Prostate gland (tissue), 2 donors: ENCODE measurements at regions of chr1 and their contacts with region 1.

Region 1: GRCh38 chr1:209692745-209693504 is 11.7 kb upstream of the HSD11B1 start:
- DNase-seq: peak; percentile 76
- H3K4me3 ChIP-seq: no peak overlapping the region
- H3K27ac ChIP-seq: peak overlapping the region in 1 of 2 donors; percentile 16
- H3K4me1 ChIP-seq: no peaks in the 10 kb centered on the region
- H3K27me3 ChIP-seq: no peaks in the 10 kb centered on the region
- CTCF ChIP-seq: peak; percentile 73 to 90 (median 86)
- POLR2A ChIP-seq: no peak

Region 2: GRCh38 chr1:209542585-209542984 is 150.3 kb before region 1 on chr1:
- intact Hi-C with region 1: no loop called
- DNase-seq: no peak
- H3K4me3 ChIP-seq: no peak overlapping the region
- H3K27ac ChIP-seq: no peak overlapping the region
- H3K4me1 ChIP-seq: no peaks in the 10 kb centered on the region
- H3K27me3 ChIP-seq: no peaks in the 10 kb centered on the region
- CTCF ChIP-seq: no peak
- POLR2A ChIP-seq: no peak

Region 3: GRCh38 chr1:209576798-209577197 is 116.1 kb before region 1 on chr1:
- intact Hi-C with region 1: loop called (anchors 2 kb)
- DNase-seq: peak; percentile 63
- H3K4me3 ChIP-seq: no peak overlapping the region
- H3K27ac ChIP-seq: no peak overlapping the region
- H3K4me1 ChIP-seq: no peaks in the 10 kb centered on the region
- H3K27me3 ChIP-seq: no peaks in the 10 kb centered on the region
- CTCF ChIP-seq: peak; percentile 64 to 90 (median 86)
- POLR2A ChIP-seq: no peak

Region 4: DNA sequence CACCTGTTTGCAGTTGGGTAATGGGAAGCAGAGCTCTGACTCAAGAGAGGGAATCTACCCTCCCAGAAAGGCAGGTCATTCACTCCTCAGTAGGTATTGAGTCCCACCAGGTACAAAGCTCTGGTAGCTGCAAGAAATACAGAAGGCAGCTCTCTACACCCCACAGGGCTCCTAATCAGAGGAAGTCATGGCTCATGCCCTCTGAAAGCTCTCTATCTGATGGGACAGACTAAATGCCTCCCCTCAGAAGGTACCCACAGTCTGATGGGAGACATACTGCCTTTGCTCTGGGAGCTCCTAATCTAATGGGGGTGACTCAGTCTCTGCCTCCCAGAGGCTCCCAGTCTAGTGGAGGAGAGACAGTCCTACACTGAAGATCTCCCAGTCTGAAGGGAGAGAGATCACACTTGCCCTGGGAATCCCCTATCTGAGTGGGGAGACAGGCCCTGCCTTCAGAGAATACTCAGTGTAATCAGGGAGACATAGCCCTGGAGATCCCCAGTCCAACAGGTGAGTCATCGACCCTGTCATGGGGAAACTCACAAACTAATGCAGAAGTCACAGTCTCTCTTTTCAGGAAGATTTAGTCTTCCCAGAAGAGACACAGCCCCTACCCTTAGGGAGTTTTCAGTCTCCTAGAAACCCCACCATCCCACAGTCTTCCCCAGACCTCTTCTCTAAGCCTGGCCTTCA is 85.7 kb before region 1 on chr1:
- intact Hi-C with region 1: loop called (anchors 5 kb)
- DNase-seq: no peak
- H3K4me3 ChIP-seq: no peak overlapping the region
- H3K27ac ChIP-seq: no peak overlapping the region
- H3K4me1 ChIP-seq: no peaks in the 10 kb centered on the region
- H3K27me3 ChIP-seq: no peaks in the 10 kb centered on the region
- CTCF ChIP-seq: no peak
- POLR2A ChIP-seq: no peak

Region 5: DNA sequence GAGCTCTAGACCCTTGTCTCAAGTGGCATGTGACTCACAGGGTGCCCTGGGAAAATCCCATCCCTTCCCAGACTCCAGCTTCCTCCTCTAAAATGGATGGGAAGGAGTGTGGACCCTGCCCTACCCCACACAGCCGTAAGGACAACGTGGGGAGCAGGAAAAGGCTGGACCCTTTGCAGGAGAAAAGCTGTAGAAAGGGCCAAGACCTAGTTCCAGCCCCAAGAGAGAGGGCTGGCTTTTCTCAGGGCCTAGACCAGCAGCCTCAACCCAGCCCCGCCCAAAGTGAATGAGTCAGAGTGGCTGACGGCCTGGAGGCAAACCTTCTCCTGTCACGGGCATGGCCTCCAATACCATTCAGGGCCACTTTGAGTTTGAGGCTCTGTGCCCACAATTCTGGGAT is 41.8 kb before region 1 on chr1:
- intact Hi-C with region 1: no loop called
- DNase-seq: peak; percentile 68
- H3K4me3 ChIP-seq: peak overlapping the region in 1 of 2 donors; percentile 19
- H3K27ac ChIP-seq: peak overlapping the region in 1 of 2 donors; percentile 79
- H3K4me1 ChIP-seq: no peaks in the 10 kb centered on the region
- H3K27me3 ChIP-seq: no peaks in the 10 kb centered on the region
- CTCF ChIP-seq: no peak
- POLR2A ChIP-seq: peak; percentile 65

Region 6: DNA sequence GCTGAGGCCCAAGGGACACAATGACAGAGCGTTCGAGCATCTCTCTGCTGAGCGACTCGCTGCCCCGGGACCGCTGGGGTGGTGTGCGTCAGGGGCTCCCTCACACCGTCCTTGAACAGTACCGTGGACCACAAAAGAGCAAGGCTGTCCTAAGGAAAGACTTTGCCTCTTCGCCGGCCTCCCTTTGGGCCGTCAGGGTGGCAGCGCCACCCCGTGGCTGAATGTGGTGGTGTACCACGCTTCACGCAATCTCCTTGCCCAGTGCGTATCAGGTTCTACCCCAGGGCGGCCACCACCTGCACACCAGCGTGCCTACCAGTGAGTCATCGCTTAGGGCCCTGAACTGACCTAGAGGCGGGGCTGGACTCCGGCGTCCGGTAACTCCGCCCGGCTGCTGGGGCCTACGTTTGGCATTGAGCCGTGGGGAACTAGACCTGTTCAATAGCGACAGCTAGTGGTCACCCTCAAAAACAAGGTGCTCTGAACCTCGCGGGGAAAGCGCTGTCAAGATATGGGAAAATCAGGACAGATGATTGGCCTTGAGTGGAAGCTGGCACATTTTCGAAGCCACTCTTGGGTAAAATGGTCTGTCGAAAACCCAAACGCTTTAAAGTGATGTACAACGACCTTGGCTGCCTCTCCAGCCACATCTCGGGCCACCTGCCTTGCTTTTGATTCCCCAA is 54.8 kb after region 1 on chr1:
- intact Hi-C with region 1: loop called (anchors 2 kb)
- DNase-seq: peak; percentile 89
- H3K4me3 ChIP-seq: peak overlapping the region in 1 of 2 donors; percentile 13
- H3K27ac ChIP-seq: peak overlapping the region; percentile 32 to 36
- H3K4me1 ChIP-seq: peaks cover 5% of the 10 kb centered on the region
- H3K27me3 ChIP-seq: no peaks in the 10 kb centered on the region
- CTCF ChIP-seq: peak; percentile 85 to 96 (median 87)
- POLR2A ChIP-seq: no peak